Kidney (tissue), 22 donors: ENCODE measurements at regions of chr1 and their contacts with region 1.

Region 1: DNA sequence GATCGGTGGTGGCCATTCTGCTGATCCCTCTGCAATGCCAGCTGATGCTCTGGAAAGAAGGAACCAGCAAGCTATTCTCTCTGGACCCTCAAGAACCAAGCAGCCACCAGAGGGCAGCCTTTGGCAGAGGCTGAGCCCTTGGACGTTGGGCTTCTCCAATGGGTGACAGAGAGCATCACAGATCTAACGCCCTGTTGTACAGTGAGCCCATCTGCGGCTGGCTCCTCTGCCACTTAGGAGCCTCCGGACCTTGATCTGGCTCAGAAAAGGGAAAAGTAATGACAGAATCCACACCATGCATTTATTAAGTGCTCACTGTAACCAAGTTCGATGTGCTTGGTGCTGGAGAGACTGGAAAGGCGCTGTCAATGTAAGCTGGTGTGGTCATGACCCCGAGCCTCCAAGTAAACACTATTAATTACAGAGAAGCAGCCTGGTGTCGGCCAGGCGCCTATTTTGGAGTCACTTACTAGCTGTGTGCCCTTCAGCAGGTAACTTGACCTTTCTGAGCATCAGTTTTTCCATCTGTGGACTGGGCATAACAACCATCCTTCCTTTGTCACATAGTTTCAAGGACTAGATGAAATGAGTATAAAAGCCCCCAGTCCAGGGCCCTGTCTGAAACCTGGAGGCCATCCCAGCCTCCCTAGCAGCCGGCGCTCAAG is 34.9 kb downstream of the ECE1 start:
- DNase-seq: peak; percentile 91 to 95 (median 92)
- H3K4me3 ChIP-seq: no peak overlapping the region
- H3K27ac ChIP-seq: no peak overlapping the region
- H3K4me1 ChIP-seq: peaks cover 0 to 17% (median 13%) of the 10 kb centered on the region in 3 donors
- H3K27me3 ChIP-seq: no peaks in the 10 kb centered on the region
- CTCF ChIP-seq: peak; percentile 89

Region 2: DNA sequence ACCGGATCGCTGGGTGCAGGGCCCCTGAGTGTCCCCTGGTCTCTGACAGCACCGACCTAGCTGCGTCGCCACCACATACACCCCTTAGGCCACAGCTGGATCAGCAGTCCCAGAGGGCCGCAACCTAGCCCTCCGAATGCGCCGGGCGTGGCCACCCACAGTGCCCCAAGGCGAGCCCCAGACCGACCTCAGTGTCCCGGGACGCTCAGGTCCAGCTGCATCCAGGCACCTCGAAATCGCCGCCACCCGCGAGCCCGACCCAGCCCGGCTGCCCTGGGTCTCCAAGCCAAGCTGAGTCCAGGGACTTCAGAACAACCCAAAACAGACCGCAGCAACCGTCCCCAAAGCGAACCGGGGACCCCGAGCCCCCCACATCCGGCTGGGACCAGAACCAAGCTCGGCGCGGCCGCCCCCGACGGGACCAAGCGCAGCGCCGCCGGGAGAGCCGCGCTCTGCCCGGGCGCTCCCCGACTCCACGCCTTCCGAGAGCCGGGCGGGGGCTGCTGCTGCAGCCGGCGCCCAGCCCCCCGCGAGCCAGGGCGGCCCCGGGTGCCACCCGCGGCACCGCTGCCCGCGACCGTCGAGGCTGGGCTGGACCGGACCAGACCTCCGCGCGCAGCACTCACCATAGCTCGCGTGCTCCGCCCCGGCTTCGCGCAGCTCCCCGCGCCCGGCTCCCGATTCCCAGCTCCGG is 89.5 kb after region 1 on chr1:
- intact Hi-C with region 1: loop called (anchors 10 kb)
- DNase-seq: peak in 1 of 5 donors; percentile 85
- H3K4me3 ChIP-seq: peak overlapping the region; percentile 12 to 64 (median 52)
- H3K27ac ChIP-seq: peak overlapping the region; percentile 74 to 78
- H3K4me1 ChIP-seq: peaks cover 0 to 45% (median 32%) of the 10 kb centered on the region in 3 donors
- H3K27me3 ChIP-seq: no peaks in the 10 kb centered on the region
- CTCF ChIP-seq: no peak